ENCODE measurements at regions of chr17 and their contacts with region 1.

Region 1: GRCh38 chr17:50949989-50950881 is 84.1 kb upstream of the TOB1 start:
- DNase-seq: peak; percentile 93

Region 2: GRCh38 chr17:50758989-50759544 is 191.2 kb before region 1 on chr17:
- intact Hi-C with region 1: no loop called
- DNase-seq: no peak

Region 3: GRCh38 chr17:50853015-50853615 is 97.1 kb before region 1 on chr17:
- intact Hi-C with region 1: loop called (anchors 5 kb)
- DNase-seq: no peak